ENCODE measurements at regions of chr1 and their contacts with region 1.

Region 1: GRCh38 chr1:207084701-207085180 is 3.9 kb upstream of the C4BPB start:
- DNase-seq: peak; percentile 19 to 83 (median 40)
- ATAC-seq: peak; percentile 77
- H3K4me3 ChIP-seq: no peak overlapping the region
- H3K4me3 Mint-ChIP-seq: no peak overlapping the region
- H3K27ac ChIP-seq: no peak overlapping the region
- H3K27ac Mint-ChIP-seq: no peak overlapping the region
- H3K4me1 ChIP-seq: peaks cover 10% of the 10 kb centered on the region
- H3K4me1 Mint-ChIP-seq: peaks cover 21% of the 10 kb centered on the region
- H3K27me3 ChIP-seq: no peaks in the 10 kb centered on the region
- H3K27me3 Mint-ChIP-seq: peaks cover 35% of the 10 kb centered on the region
- CTCF ChIP-seq: peak; percentile 68

Region 2: GRCh38 chr1:206834711-206835110 is 250.0 kb before region 1 on chr1:
- CTCF ChIA-PET with region 1: no interaction called
- POLR2A ChIA-PET with region 1: no interaction called
- intact Hi-C with region 1: no loop called
- DNase-seq: peak in 2 of 14 experiments; percentile 49 to 60
- ATAC-seq: no peak
- H3K4me3 ChIP-seq: no peak overlapping the region
- H3K4me3 Mint-ChIP-seq: no peak overlapping the region
- H3K27ac ChIP-seq: no peak overlapping the region
- H3K27ac Mint-ChIP-seq: no peak overlapping the region
- H3K4me1 ChIP-seq: peaks cover 4% of the 10 kb centered on the region
- H3K4me1 Mint-ChIP-seq: peaks cover 16% of the 10 kb centered on the region
- H3K27me3 ChIP-seq: peaks cover 0 to 7% of the 10 kb centered on the region in 2 experiments
- H3K27me3 Mint-ChIP-seq: peaks cover 6% of the 10 kb centered on the region
- CTCF ChIP-seq: no peak

Region 3: GRCh38 chr1:207404849-207405525 is 320.2 kb after region 1 on chr1:
- CTCF ChIA-PET with region 1: interaction called, 24 read pairs
- POLR2A ChIA-PET with region 1: interaction called, 3 read pairs
- intact Hi-C with region 1: loop called (anchors 1 kb)
- DNase-seq: peak in 4 of 14 experiments; percentile 11 to 79 (median 72)
- ATAC-seq: peak; percentile 79
- H3K4me3 ChIP-seq: no peak overlapping the region
- H3K4me3 Mint-ChIP-seq: no peak overlapping the region
- H3K27ac ChIP-seq: no peak overlapping the region
- H3K27ac Mint-ChIP-seq: no peak overlapping the region
- H3K4me1 ChIP-seq: no peaks in the 10 kb centered on the region
- H3K4me1 Mint-ChIP-seq: no peaks in the 10 kb centered on the region
- H3K27me3 ChIP-seq: no peaks in the 10 kb centered on the region
- H3K27me3 Mint-ChIP-seq: no peaks in the 10 kb centered on the region
- CTCF ChIP-seq: peak; percentile 81

Measured in CD4-positive, alpha-beta T cell (primary cell).